ENCODE measurements at regions of chr20 and their contacts with region 1.

Region 1: GRCh38 chr20:45771182-45771759 is 20.4 kb downstream of the WFDC3 start:
- DNase-seq: peak; percentile 87
- ATAC-seq: peak; percentile 85
- H3K4me3 Mint-ChIP-seq: no peak overlapping the region
- H3K27ac Mint-ChIP-seq: no peak overlapping the region
- H3K4me1 Mint-ChIP-seq: peaks cover 6% of the 10 kb centered on the region
- H3K27me3 Mint-ChIP-seq: peaks cover 8% of the 10 kb centered on the region
- CTCF ChIP-seq: peak; percentile 85

Region 2: GRCh38 chr20:45322952-45323383 is 448.3 kb before region 1 on chr20:
- CTCF ChIA-PET with region 1: interaction called, 17 read pairs
- POLR2A ChIA-PET with region 1: no interaction called
- intact Hi-C with region 1: no loop called
- DNase-seq: peak; percentile 43
- ATAC-seq: no peak
- H3K4me3 Mint-ChIP-seq: no peak overlapping the region
- H3K27ac Mint-ChIP-seq: no peak overlapping the region
- H3K4me1 Mint-ChIP-seq: peaks cover 25% of the 10 kb centered on the region
- H3K27me3 Mint-ChIP-seq: no peaks in the 10 kb centered on the region
- CTCF ChIP-seq: no peak

Region 3: GRCh38 chr20:45436732-45437391 is 334.4 kb before region 1 on chr20:
- CTCF ChIA-PET with region 1: interaction called, 24 read pairs
- POLR2A ChIA-PET with region 1: no interaction called
- intact Hi-C with region 1: no loop called
- DNase-seq: peak; percentile 92
- ATAC-seq: peak; percentile 99
- H3K4me3 Mint-ChIP-seq: peak overlapping the region; percentile 73
- H3K27ac Mint-ChIP-seq: no peak overlapping the region
- H3K4me1 Mint-ChIP-seq: peaks cover 17% of the 10 kb centered on the region
- H3K27me3 Mint-ChIP-seq: no peaks in the 10 kb centered on the region
- CTCF ChIP-seq: peak; percentile 97

Region 4: GRCh38 chr20:45465491-45466266 is 305.6 kb before region 1 on chr20:
- CTCF ChIA-PET with region 1: interaction called, 34 read pairs
- POLR2A ChIA-PET with region 1: no interaction called
- intact Hi-C with region 1: no loop called
- DNase-seq: no peak
- ATAC-seq: no peak
- H3K4me3 Mint-ChIP-seq: no peak overlapping the region
- H3K27ac Mint-ChIP-seq: no peak overlapping the region
- H3K4me1 Mint-ChIP-seq: peaks cover 10% of the 10 kb centered on the region
- H3K27me3 Mint-ChIP-seq: peaks cover 24% of the 10 kb centered on the region
- CTCF ChIP-seq: no peak

Region 5: GRCh38 chr20:45583502-45583901 is 187.8 kb before region 1 on chr20:
- CTCF ChIA-PET with region 1: interaction called, 16 read pairs
- POLR2A ChIA-PET with region 1: no interaction called
- intact Hi-C with region 1: no loop called
- DNase-seq: no peak
- ATAC-seq: no peak
- H3K4me3 Mint-ChIP-seq: no peak overlapping the region
- H3K27ac Mint-ChIP-seq: no peak overlapping the region
- H3K4me1 Mint-ChIP-seq: no peaks in the 10 kb centered on the region
- H3K27me3 Mint-ChIP-seq: peaks cover 13% of the 10 kb centered on the region
- CTCF ChIP-seq: no peak

Region 6: GRCh38 chr20:45629496-45630100 is 141.7 kb before region 1 on chr20 and contains the start of gene WFDC10A:
- CTCF ChIA-PET with region 1: interaction called, 66 read pairs
- POLR2A ChIA-PET with region 1: no interaction called
- intact Hi-C with region 1: no loop called
- DNase-seq: peak; percentile 46
- ATAC-seq: peak; percentile 93
- H3K4me3 Mint-ChIP-seq: no peak within 1 kb of the TSS
- H3K27ac Mint-ChIP-seq: no peak within 1 kb of the TSS
- H3K4me1 Mint-ChIP-seq: peaks cover 3% of the 10 kb centered on the region
- H3K27me3 Mint-ChIP-seq: peaks cover 30% of the 10 kb centered on the region
- CTCF ChIP-seq: peak; percentile 68
- total RNA-seq, gene WFDC10A: not detected

Region 7: DNA sequence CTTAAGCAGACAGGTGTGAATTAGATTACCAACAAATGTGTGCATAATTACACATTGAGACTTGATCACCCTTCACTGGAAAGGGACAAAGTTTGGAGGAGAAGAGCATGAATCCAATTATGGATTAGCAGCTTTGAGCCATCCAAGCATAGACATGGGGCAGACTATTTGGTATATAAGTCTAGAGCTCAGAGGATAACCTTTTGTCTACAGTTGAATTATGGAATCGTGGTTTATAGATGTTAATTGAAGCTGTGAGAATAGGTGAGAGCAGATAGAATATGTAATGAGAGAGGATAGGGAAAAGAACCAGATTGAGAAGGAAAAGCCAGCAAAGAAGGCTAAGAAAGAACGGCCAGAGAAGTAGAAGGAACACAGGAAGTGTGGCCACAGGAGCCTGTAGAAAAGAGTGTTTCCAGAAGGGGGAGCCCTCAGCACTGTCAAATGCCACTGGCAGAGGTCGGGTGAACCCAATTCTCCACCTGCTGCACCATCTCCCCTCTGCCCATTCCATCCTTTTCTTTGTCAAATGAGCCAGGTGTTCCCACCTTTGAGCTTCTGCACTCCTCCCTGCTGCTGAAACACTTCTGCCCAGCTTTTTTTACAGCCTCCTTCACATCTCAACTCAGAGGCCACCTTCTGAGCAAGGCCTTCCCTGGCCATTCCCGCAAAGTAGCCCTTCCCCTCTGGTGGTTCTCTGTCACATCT is 27.8 kb after region 1 on chr20:
- CTCF ChIA-PET with region 1: interaction called, 19 read pairs
- POLR2A ChIA-PET with region 1: no interaction called
- intact Hi-C with region 1: no loop called
- DNase-seq: peak; percentile 83
- ATAC-seq: peak; percentile 99
- H3K4me3 Mint-ChIP-seq: no peak overlapping the region
- H3K27ac Mint-ChIP-seq: peak overlapping the region; percentile 22
- H3K4me1 Mint-ChIP-seq: peaks cover 6% of the 10 kb centered on the region
- H3K27me3 Mint-ChIP-seq: no peaks in the 10 kb centered on the region
- CTCF ChIP-seq: peak; percentile 79

Region 8: DNA sequence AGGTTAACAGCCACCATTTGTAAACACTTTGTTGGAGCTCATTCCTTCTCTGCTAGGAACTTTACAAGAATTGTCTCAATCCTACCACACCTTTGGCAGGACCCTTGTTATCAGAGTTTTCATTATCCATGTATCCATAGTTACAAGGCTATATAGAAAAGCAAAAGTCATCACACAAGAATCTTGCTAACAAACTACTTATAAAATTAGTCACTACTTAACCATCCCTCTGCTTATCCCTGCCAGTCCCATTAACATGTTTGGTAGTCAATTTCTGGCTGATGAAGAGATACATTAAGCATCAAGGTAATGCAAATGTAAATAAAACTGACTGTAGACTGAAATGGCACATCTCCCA is 96.5 kb after region 1 on chr20:
- CTCF ChIA-PET with region 1: no interaction called
- POLR2A ChIA-PET with region 1: no interaction called
- intact Hi-C with region 1: no loop called
- DNase-seq: no peak
- ATAC-seq: no peak
- H3K4me3 Mint-ChIP-seq: no peak overlapping the region
- H3K27ac Mint-ChIP-seq: no peak overlapping the region
- H3K4me1 Mint-ChIP-seq: no peaks in the 10 kb centered on the region
- H3K27me3 Mint-ChIP-seq: no peaks in the 10 kb centered on the region
- CTCF ChIP-seq: no peak